ENCODE measurements at regions of chr1 and their contacts with region 1.

Region 1: DNA sequence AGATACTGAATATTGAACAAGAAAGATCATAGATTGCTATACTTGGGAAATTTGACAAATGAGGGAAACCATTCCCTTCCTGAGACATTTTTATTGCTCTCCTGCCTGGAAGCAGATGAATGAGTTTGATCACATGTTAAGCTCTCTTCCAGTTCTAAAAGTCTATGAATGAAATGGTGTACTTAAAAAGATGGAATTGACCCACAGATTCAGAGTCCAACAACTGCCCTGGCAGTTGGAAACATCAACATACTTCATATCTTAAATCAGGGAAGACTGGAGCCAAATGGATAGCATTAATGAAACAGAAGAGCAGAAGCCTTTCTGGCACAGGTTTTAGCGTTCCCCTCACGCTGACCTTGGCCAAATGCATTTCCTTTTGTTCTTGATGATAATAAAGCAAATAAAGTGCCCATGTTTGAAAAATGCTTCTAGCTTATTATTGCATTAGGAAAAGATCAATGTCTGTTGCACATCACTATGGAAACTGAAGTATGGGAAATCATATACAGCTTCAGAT is 142.6 kb downstream of the ESRRG start:
- DNase-seq: no peak
- ATAC-seq: no peak
- H3K4me3 ChIP-seq: no peak overlapping the region
- H3K27ac ChIP-seq: no peak overlapping the region
- H3K4me1 ChIP-seq: no peaks in the 10 kb centered on the region
- H3K27me3 ChIP-seq: no peaks in the 10 kb centered on the region
- CTCF ChIP-seq: no peak
- POLR2A ChIP-seq: no peak
- RAD21 ChIP-seq: no peak

Region 2: DNA sequence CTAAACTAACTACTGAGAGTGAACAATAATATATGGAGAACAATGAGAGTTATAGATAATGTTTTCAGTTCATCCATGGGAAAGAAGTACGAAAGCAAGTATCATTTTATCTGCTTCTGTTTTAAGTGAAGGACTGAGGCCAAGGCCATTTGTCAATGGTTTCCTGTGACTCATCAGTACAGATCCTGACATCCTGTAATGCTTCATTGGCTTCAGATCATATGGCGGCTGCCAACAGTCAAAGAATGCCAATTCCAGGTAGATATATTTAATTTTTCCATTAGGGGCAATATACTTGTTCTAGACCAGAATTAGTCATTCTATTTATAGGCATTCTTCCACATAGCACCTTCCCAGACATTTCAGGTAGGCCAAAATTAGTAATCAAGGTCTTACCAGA is 254.7 kb before region 1 on chr1:
- CTCF ChIA-PET with region 1: no interaction called
- POLR2A ChIA-PET with region 1: no interaction called
- dilution Hi-C with region 1: no loop called
- in situ Hi-C with region 1: no loop called
- intact Hi-C with region 1: no loop called
- DNase-seq: peak; percentile 3
- ATAC-seq: no peak
- H3K4me3 ChIP-seq: no peak overlapping the region
- H3K27ac ChIP-seq: no peak overlapping the region
- H3K4me1 ChIP-seq: 0 out of 2 replicates have a peak, but pooled peaks cover 2% of the 10 kb centered on the region
- H3K27me3 ChIP-seq: no peaks in the 10 kb centered on the region
- CTCF ChIP-seq: no peak
- POLR2A ChIP-seq: no peak
- RAD21 ChIP-seq: no peak

Region 3: DNA sequence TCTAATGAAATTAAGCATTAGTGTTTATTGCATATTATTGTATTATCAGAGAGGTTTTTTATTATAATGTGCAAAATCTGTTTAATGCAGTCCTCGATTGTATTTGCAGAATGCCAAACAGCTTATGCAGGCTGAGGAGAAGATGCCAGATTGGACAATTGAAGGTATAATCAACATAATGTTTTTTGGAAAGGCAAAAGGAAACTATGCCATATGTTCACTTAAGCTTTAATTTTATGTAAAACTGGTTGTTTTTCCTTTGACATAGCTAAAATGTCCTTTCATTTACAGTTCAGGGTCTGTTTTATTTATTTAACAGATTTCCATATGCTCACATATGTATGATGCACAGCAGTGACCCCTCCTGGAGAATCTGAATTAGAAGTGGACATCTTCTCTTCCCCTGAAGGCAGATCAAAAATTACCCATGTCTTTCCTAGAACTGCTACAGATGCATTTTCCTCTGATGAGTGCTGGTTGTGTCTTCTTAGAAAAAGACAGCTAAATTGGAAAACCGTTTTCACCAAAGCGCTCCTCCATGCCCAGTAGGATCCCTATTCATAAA is 13.9 kb before region 1 on chr1:
- CTCF ChIA-PET with region 1: interaction called, 12 read pairs
- POLR2A ChIA-PET with region 1: no interaction called
- dilution Hi-C with region 1: no loop called
- in situ Hi-C with region 1: no loop called
- intact Hi-C with region 1: no loop called
- DNase-seq: peak; percentile 45
- ATAC-seq: peak; percentile 62
- H3K4me3 ChIP-seq: no peak overlapping the region
- H3K27ac ChIP-seq: no peak overlapping the region
- H3K4me1 ChIP-seq: no peaks in the 10 kb centered on the region
- H3K27me3 ChIP-seq: no peaks in the 10 kb centered on the region
- CTCF ChIP-seq: peak; percentile 56
- POLR2A ChIP-seq: no peak
- RAD21 ChIP-seq: peak; percentile 56